ENCODE measurements at regions of chr21 and their contacts with region 1.

Region 1: GRCh38 chr21:45140346-45140940 is 66.1 kb downstream of the ADARB1 start:
- DNase-seq: peak; percentile 45 to 97 (median 75)

Region 2: DNA sequence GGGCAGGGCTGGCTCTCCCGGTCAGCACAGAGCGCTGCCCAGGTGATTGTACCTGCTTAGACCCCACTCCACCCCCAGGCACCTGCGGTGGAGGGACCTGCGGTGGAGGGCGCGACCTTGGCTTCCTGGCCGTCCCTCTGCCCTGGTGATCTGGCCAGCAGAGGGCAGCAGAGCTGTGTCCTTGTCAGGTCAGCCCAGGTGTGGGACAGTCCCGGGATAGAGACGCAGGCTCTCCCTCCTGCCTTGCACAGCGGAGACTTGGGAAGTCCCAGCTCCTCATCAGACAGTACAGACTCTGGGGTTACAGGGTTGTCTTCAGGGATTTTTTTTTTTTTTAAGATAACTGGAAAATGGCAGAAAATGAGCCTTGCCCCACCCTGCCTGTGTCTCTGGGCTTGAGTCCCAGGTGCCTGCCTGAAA is 190.7 kb before region 1 on chr21:
- intact Hi-C with region 1: loop called (anchors 1 kb)
- DNase-seq: peak in 9 of 10 donors; percentile 51 to 95 (median 77)

Region 3: GRCh38 chr21:45074048-45074817 is 66.2 kb before region 1 on chr21 and contains the start of gene ADARB1:
- intact Hi-C with region 1: loop called (anchors 10 kb)
- DNase-seq: peak; percentile 37 to 94 (median 65)

Region 4: DNA sequence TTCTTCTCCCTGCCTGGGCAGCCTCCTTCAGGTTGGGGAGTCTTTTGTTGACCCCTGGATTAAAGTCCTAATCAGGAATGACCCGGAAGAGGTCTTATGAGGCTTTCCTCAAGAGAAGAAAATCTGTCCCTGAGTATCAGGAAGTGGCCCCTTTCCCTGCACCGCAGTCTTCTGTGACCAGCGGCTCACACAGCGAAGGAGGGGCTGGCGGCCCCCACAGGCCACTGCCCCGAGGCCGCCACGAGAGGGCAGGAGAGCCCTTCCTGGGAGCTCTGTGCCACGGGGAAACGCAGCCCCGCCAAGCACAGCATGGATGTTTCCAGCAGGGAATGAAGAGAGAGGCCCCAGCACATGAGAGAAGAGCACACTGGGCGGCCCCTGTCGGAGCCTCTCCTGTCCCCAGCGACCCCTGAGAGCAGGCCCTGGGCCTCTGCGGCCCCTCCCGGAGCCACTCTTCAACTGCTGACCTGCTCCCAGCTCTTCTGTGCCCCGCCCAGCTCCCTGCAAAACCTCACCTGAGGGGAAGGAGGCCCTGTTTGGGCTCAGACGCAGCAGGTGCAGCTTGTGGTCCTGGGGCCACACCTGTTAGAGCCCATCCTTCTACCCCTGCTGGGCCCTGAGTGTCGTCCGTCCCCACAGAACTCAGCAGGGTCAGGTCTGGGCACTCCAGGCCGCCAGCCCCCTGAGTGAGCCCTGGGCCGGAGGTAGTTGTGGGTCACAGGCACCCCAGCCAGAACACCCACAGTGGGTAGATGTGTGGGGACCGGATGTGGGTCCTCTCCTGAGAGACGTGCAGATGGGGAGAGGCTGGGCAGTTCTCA is 152.2 kb after region 1 on chr21:
- intact Hi-C with region 1: loop called (anchors 5 kb)
- DNase-seq: peak; percentile 66 to 98 (median 87)

Region 5: DNA sequence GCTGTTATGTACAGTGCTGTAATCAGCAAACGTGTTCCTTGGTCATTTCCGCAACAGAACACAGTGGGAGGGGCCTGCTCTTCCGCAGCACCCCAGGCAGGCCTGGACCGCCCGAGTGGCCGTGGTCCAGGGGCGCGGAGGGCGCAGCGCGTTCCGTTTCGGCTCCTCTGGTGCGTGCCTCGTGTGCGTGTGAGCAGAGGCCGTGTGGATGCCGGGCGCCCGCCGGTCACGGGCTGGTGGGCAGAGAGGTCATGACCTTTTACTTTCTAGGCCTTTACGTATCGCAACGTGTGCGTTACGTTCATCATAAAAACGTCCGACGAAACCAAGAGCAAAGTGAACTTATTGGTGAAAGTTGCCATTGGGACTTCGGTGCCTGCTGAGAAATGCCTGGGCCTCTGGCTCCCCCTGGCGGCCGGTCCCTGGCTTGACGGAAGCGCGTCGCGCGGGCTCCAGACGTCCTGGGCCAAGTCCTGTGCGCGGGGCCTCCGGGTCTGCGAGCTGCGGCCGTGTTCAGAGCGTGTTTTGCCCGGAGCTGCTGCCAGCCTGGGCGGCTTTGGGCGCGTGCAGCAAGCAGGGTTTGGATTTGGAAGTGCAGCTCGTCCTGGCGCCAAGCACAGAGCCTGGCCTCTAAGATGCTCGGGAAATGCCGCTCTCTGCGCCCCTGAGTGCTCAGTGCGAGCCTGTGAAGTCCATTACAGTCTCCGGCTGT is 298.9 kb after region 1 on chr21:
- intact Hi-C with region 1: loop called (anchors 1 kb)
- DNase-seq: peak; percentile 66 to 97 (median 86)

Region 6: DNA sequence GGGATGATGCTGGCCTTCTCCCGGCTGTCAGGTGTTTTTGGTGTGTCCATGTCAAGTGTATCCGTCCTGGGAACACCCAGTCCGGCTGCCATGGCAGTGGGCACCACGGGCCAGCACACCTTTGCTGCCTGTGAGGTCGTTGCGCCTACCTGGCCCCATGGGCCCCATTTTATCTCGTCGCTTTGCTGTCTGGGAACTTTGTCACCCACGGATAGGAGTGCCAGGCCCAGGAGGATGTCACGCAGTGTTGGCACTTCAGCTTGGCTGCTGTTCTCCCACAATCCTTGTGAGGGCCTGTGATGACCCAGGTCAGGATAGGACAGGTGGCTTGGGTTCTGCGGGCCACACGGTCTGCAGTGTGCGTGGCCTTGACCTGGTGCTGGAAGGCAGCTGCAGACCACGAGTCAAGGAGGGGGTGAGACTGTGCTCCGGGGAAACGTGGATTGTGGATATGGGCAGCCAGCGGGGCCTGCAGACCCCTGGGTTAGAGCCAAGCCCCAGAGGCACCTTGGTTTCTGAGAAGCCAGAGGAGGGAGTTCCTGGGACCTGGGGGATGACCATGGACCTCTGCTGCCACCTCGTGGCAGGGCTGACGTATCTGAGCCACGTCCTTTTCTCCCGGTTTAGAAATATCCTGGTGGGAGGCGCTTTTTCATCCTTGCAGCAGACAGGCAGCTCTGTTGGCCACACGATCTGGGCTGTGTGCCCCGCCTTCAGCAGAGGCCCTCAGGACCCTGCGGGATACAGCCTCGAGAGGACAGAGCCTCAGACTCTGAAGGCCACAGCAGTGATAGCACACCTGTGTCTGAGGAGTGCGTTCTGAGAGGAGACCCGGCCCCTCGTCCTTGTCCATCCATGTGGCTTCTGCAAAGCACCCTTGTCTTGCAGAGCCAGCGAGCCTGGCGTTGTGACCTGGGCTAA is 680.0 kb after region 1 on chr21:
- intact Hi-C with region 1: loop called (anchors 5 kb)
- DNase-seq: peak; percentile 60 to 97 (median 82)